H1 (cell line): ENCODE measurements at regions of chr12 and their contacts with region 1.

Region 1: DNA sequence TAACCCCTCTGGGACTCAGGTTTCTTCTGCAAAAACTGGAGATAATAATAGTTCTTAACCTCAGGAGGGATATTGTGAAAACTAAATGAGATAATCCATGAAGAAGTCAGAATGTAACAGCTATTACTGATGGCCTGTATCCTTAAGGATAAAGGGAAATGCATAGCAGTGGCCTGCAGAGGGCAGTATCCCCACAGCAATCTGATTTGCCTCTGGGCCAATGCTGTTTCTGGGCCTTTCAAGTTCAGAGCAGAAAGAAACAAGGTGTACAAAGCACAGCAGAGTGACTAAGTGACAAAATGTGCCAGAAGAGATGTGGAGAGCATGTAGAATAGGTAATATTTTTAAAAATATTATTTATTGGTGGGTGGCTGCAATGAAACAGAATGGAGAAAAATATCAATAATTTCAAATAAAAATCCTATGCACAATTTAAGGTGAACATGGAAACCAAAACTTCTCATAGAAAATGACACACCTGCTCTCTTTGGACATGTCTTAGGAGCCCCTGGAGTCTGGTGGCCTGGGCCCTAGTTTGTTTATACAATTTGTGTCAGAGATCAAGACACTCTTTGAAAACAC is 90.3 kb downstream of the C12orf75 start:
- DNase-seq: peak in 1 of 2 experiments; percentile 83
- H3K4me3 ChIP-seq: no peak overlapping the region
- H3K27ac ChIP-seq: no peak overlapping the region
- H3K4me1 ChIP-seq: no peaks in the 10 kb centered on the region
- H3K27me3 ChIP-seq: no peaks in the 10 kb centered on the region
- CTCF ChIP-seq: peak; percentile 51 to 90 (median 82)
- EP300 ChIP-seq: no peak
- POLR2A ChIP-seq: no peak
- RAD21 ChIP-seq: peak; percentile 100

Region 2: GRCh38 chr12:105409801-105410471 is 10.8 kb before region 1 on chr12:
- CTCF ChIA-PET with region 1: interaction called, 15 read pairs
- POLR2A ChIA-PET with region 1: no interaction called
- DNase-seq: no peak
- H3K4me3 ChIP-seq: no peak overlapping the region
- H3K27ac ChIP-seq: no peak overlapping the region
- H3K4me1 ChIP-seq: peaks cover 0 to 6% (median 0%) of the 10 kb centered on the region in 4 experiments; a peak in 1 of 7 replicates
- H3K27me3 ChIP-seq: no peaks in the 10 kb centered on the region
- CTCF ChIP-seq: no peak
- EP300 ChIP-seq: no peak
- POLR2A ChIP-seq: no peak
- RAD21 ChIP-seq: no peak

Region 3: DNA sequence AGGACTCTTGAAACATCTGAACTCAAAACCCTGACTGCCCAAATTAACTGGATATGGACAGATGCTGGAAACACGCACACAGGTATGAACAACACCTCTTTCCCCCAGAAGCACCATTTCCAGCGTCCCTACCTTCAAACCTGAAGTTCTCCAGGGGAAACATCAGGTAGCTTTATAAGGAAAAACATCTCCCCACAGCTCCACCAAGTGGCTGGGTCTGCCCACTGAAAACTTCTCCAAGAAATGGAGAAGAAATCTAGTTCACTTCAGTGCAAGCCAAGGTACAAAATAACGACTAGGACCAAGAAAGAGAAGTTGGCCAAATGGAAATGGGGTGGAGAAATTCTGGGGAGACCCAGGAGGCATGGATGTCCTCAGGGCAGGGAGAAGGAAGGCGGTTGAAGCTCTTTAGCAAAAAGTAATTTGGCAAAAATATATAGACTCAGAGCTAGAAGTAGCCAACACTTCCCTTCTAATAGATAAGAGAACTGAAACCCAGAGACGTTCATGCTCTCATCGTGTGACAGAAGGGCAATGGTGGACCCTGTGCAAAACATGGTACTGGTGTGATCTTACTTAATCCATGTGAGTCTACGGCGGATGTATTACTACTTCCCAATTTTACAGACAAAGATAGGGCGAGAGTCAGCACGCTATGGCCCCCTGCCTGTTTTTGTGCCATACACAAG is 728.5 kb after region 1 on chr12:
- CTCF ChIA-PET with region 1: interaction called, 10 read pairs
- POLR2A ChIA-PET with region 1: no interaction called
- DNase-seq: no peak
- H3K4me3 ChIP-seq: no peak overlapping the region
- H3K27ac ChIP-seq: no peak overlapping the region
- H3K4me1 ChIP-seq: peaks cover 0 to 7% (median 1%) of the 10 kb centered on the region in 4 experiments; a peak in 2 of 7 replicates
- H3K27me3 ChIP-seq: no peaks in the 10 kb centered on the region
- CTCF ChIP-seq: peak; percentile 3 to 69 (median 53); a peak in 3 of 4 replicates
- EP300 ChIP-seq: no peak
- POLR2A ChIP-seq: no peak
- RAD21 ChIP-seq: peak; percentile 56 to 70